Activated B cell treated with CpG ODN at 0.5 μM for 24 hours (primary cell): ENCODE measurements at regions of chr9 and their contacts with region 1.

Region 1: GRCh38 chr9:1939926-1940368 is 75.2 kb upstream of the SMARCA2 start:
- DNase-seq: no peak
- ATAC-seq: peak; percentile 85
- H3K4me3 Mint-ChIP-seq: peak overlapping the region; percentile 15
- H3K27ac Mint-ChIP-seq: peak overlapping the region; percentile 32
- H3K4me1 Mint-ChIP-seq: peaks cover 25% of the 10 kb centered on the region
- H3K27me3 Mint-ChIP-seq: no peaks in the 10 kb centered on the region
- CTCF ChIP-seq: no peak

Region 2: GRCh38 chr9:1460143-1460769 is 479.7 kb before region 1 on chr9:
- CTCF ChIA-PET with region 1: interaction called, 3 read pairs
- POLR2A ChIA-PET with region 1: no interaction called
- intact Hi-C with region 1: loop called (anchors 1 kb)
- DNase-seq: no peak
- ATAC-seq: no peak
- H3K4me3 Mint-ChIP-seq: no peak overlapping the region
- H3K27ac Mint-ChIP-seq: no peak overlapping the region
- H3K4me1 Mint-ChIP-seq: no peaks in the 10 kb centered on the region
- H3K27me3 Mint-ChIP-seq: peaks cover 4% of the 10 kb centered on the region
- CTCF ChIP-seq: no peak

Region 3: GRCh38 chr9:1726993-1727759 is 212.8 kb before region 1 on chr9:
- CTCF ChIA-PET with region 1: interaction called, 7 read pairs
- POLR2A ChIA-PET with region 1: no interaction called
- intact Hi-C with region 1: loop called (anchors 1 kb)
- DNase-seq: no peak
- ATAC-seq: no peak
- H3K4me3 Mint-ChIP-seq: no peak overlapping the region
- H3K27ac Mint-ChIP-seq: no peak overlapping the region
- H3K4me1 Mint-ChIP-seq: no peaks in the 10 kb centered on the region
- H3K27me3 Mint-ChIP-seq: peaks cover 3% of the 10 kb centered on the region
- CTCF ChIP-seq: no peak

Region 4: GRCh38 chr9:1875921-1876448 is 64.0 kb before region 1 on chr9:
- CTCF ChIA-PET with region 1: interaction called, 12 read pairs
- POLR2A ChIA-PET with region 1: interaction called, 6 read pairs
- intact Hi-C with region 1: loop called (anchors 1 kb)
- DNase-seq: peak; percentile 24
- ATAC-seq: peak; percentile 59
- H3K4me3 Mint-ChIP-seq: peak overlapping the region; percentile 46
- H3K27ac Mint-ChIP-seq: peak overlapping the region; percentile 95
- H3K4me1 Mint-ChIP-seq: peaks cover 30% of the 10 kb centered on the region
- H3K27me3 Mint-ChIP-seq: no peaks in the 10 kb centered on the region
- CTCF ChIP-seq: no peak

Region 5: DNA sequence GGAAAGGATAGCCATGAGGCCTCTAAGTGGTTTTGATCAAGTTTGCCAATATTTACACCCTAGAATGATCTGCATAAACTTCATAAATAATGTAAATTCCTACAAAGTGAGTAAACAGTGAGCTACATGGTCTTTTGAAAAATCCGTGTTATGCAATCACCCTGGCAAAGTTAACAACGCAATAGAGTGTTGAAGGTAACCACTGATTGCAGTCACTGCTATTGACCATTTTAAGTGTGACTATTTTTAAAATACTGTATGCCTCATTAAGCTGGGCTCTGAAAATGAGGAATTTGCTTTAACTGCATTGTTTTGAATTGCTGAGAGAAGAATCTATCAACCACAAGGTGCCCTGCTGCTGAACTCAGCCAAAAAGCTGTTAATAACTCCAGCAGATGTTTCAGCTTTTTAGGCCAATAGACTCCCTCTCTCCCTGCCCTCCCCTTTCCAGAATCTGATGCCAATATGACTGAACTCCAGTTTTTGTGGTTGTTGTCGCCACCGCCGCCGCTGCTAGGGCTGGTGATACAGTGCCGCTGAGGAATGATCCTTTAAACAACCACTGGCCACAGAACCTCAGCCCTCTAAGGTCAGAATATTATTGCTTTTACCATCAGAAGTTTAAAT is 39.9 kb after region 1 on chr9:
- CTCF ChIA-PET with region 1: no interaction called
- POLR2A ChIA-PET with region 1: no interaction called
- intact Hi-C with region 1: no loop called
- DNase-seq: no peak
- ATAC-seq: no peak
- H3K4me3 Mint-ChIP-seq: no peak overlapping the region
- H3K27ac Mint-ChIP-seq: no peak overlapping the region
- H3K4me1 Mint-ChIP-seq: no peaks in the 10 kb centered on the region
- H3K27me3 Mint-ChIP-seq: no peaks in the 10 kb centered on the region
- CTCF ChIP-seq: no peak

Region 6: DNA sequence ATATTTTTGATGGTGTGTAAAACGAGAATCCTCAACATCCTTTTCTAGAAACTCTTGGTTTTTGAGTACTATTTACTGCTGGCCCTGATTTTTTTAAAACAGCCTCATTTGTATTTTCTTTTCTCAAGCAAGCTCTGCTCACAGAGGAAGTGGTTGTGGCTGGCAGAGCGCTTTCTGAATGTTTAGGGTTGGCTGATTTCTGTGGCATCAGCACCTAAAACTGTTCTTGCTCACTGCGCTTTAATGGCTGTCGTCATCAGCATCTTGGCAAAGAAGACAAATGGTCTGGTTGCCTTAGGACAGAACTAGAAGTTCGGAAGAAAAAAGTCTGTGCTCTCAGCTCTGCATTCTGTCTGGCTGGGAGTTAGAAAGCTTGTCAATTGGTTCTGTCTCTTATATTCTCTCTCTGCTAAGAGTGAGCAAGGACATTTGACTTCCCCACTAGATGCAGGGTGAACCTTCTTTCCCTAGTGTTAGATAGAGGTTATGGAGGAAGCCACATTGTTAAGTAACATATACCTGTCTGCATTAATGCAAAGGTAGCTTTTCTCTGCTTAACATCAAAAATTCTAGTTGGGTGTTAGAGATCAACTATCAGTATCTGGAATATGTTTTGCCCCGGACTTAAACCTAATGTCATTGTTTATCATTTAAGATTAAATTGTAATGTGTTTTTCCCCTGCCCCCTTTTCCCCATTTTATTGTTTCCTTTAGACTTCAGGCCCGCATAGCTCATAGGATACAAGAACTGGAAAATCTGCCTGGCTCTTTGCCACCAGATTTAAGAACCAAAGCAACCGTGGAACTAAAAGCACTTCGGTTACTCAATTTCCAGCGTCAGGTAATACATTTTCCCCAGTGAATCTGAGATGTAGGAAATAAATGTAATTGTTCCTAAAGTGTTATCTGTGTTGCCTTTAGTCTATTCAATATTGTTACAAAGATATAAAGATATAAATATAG is 114.2 kb after region 1 on chr9:
- CTCF ChIA-PET with region 1: no interaction called
- POLR2A ChIA-PET with region 1: no interaction called
- intact Hi-C with region 1: no loop called
- DNase-seq: peak; percentile 27
- ATAC-seq: peak; percentile 92
- H3K4me3 Mint-ChIP-seq: peak overlapping the region; percentile 55
- H3K27ac Mint-ChIP-seq: peak overlapping the region; percentile 85
- H3K4me1 Mint-ChIP-seq: peaks cover 29% of the 10 kb centered on the region
- H3K27me3 Mint-ChIP-seq: no peaks in the 10 kb centered on the region
- CTCF ChIP-seq: no peak

Region 7: DNA sequence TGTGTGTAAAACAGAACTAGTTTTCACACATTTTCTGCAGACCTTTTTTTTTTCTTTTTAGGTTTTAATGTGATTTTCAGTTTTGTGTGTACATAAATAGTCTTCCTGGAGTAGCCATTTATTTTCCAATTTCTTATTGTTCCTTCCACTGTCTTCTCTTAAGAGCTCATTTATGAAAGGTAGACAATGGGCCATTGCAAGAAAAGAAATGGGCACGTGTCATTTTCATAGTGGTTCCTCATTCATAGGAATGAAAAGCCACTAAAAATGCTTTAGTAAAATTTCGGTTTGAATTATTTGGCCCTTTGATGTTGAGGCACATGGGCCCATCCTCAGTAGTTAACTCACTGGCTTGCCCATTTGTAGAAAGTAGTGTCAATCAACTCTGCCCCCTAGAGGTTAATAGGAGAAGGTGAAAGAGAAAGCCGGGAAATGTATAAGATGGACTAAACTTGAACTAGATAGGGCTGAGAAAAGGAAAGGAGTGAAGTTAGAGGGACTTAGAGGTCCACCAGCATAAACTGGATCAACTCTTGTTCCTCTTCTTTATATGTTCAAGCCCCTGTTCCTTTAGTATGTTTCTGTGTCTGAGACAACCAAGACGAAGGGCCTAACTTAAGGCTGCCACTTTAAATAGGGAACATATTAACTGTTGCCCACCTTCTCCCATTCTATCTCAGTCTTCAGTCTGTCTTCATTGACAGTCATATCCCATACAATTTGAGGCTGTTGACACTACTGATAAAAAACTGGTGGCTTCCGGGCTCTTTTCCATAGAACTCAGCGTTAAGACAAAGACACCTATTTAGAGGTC is 147.8 kb after region 1 on chr9:
- CTCF ChIA-PET with region 1: interaction called, 4 read pairs
- POLR2A ChIA-PET with region 1: no interaction called
- intact Hi-C with region 1: loop called (anchors 2 kb)
- DNase-seq: no peak
- ATAC-seq: peak; percentile 83
- H3K4me3 Mint-ChIP-seq: no peak overlapping the region
- H3K27ac Mint-ChIP-seq: no peak overlapping the region
- H3K4me1 Mint-ChIP-seq: no peaks in the 10 kb centered on the region
- H3K27me3 Mint-ChIP-seq: no peaks in the 10 kb centered on the region
- CTCF ChIP-seq: peak; percentile 40